HepG2 (cell line): ENCODE measurements at regions of chr2 and their contacts with region 1.

Region 1: DNA sequence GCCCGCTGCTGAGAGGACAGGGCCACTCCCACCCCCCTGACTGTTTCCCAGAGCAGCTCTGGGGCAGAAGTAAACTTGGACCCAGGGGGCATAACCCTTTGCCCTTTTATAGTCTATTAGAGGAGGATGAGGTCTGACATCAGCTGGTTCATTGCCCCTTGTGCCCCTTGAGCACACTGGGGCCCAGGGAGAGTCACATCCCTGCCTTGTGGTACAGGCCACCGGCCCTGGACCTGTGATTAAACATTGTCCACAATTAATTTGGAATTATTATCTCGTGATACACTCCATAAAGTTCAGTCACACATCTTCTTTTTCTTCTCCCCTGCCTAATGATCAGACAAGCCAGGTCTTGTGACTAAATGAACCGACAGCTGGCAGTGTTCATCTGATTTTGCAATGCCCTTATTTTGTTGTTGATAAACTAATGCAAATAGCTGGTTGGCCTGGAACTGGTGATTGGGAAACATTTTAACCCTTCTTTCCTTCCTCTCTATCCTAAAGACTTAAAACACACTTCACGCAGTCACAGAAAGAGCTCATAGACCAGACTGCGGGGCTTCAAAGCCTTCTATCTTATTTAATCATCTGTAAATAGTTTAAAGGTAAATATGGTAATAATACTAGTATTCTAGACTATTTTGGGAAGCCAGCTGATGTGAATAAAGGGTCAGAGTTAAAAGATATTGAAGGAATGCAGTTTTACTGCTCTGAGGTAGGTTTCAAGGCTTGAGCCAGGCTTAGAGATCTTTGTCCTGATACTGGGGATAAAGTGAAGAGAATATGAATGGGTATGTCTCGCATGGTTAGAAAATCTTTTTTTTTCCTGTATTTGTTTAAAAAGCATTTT is 13.3 kb downstream of the IL1R1 start:
- DNase-seq: peak; percentile 100
- ATAC-seq: peak; percentile 91
- H3K4me3 ChIP-seq: peak overlapping the region in 1 of 3 experiments; percentile 21; a peak in 2 of 6 replicates
- H3K27ac ChIP-seq: peak overlapping the region; percentile 80
- H3K4me1 ChIP-seq: peaks cover 84% of the 10 kb centered on the region
- H3K27me3 ChIP-seq: no peaks in the 10 kb centered on the region
- CTCF ChIP-seq: peak; percentile 37; the same call in 1 of the 2 replicates
- EP300 ChIP-seq: peak; percentile 68 to 99; a peak in 3 of 4 replicates
- POLR2A ChIP-seq: peak in 1 of 2 experiments; percentile 18; a peak in 1 of 4 replicates
- RAD21 ChIP-seq: peak; percentile 42; the same call in 1 of the 2 replicates

Region 2: GRCh38 chr2:101883863-101884262 is 272.0 kb before region 1 on chr2:
- CTCF ChIA-PET with region 1: no interaction called
- POLR2A ChIA-PET with region 1: no interaction called
- in situ Hi-C with region 1: no loop called
- intact Hi-C with region 1: no loop called
- DNase-seq: peak; percentile 60
- ATAC-seq: peak; percentile 73
- H3K4me3 ChIP-seq: no peak overlapping the region
- H3K27ac ChIP-seq: no peak overlapping the region
- H3K4me1 ChIP-seq: no peaks in the 10 kb centered on the region
- H3K27me3 ChIP-seq: no peaks in the 10 kb centered on the region
- CTCF ChIP-seq: peak; percentile 68
- EP300 ChIP-seq: no peak
- POLR2A ChIP-seq: no peak
- RAD21 ChIP-seq: peak; percentile 59

Region 3: DNA sequence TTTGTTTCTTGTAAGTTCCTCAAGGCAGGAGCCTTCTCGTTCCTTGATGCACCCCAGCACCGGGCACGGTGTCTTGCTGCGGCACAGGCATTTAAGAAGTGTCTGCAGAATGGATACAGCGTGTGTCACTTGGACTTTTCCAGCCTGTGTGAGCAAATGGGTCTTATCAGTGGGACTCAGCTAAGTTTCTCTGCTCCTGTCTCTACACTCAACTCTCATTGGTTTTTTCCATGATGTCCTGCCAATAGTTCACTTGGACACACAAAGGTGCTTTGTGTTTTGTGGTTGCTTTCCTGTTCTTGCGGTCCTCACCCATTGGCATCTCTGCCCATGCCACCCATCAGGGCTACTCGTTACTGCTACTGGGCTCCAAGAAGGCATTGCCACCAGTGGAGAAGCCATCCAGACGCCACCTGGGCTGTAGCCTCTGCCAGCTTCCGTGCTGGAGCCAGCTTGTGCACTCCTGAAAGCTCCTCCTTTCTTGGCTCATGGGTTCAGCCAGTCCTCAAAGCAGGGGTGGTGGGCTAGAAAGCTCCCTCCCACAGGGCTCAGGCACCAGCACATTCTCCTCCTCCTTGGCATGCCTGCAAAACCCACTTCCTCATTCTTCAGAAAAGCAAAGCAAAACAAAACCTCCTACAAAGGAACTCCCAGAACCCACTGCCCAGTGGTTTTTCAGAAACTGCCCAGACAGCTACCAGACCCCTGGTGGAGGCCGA is 122.7 kb before region 1 on chr2:
- CTCF ChIA-PET with region 1: interaction called, 3 read pairs
- POLR2A ChIA-PET with region 1: interaction called, 37 read pairs
- in situ Hi-C with region 1: no loop called
- intact Hi-C with region 1: loop called (anchors 1 kb)
- DNase-seq: peak; percentile 80
- ATAC-seq: peak; percentile 53
- H3K4me3 ChIP-seq: peak overlapping the region; percentile 8 to 59 (median 14); a peak in 5 of 6 replicates
- H3K27ac ChIP-seq: peak overlapping the region; percentile 73
- H3K4me1 ChIP-seq: peaks cover 83% of the 10 kb centered on the region
- H3K27me3 ChIP-seq: no peaks in the 10 kb centered on the region
- CTCF ChIP-seq: peak; percentile 11; the same call in 1 of the 2 replicates
- EP300 ChIP-seq: peak in 1 of 2 experiments; percentile 50; a peak in 2 of 4 replicates
- POLR2A ChIP-seq: peak; percentile 30 to 62; a peak in 3 of 4 replicates
- RAD21 ChIP-seq: no peak

Region 4: GRCh38 chr2:102057502-102058292 is 98.2 kb before region 1 on chr2:
- CTCF ChIA-PET with region 1: no interaction called
- POLR2A ChIA-PET with region 1: interaction called, 12 read pairs
- in situ Hi-C with region 1: no loop called
- intact Hi-C with region 1: loop called (anchors 2 kb)
- DNase-seq: peak; percentile 98
- ATAC-seq: peak; percentile 88
- H3K4me3 ChIP-seq: peak overlapping the region in 1 of 3 experiments; percentile 39; a peak in 1 of 6 replicates
- H3K27ac ChIP-seq: peak overlapping the region; percentile 89
- H3K4me1 ChIP-seq: peaks cover 89% of the 10 kb centered on the region
- H3K27me3 ChIP-seq: no peaks in the 10 kb centered on the region
- CTCF ChIP-seq: no peak
- EP300 ChIP-seq: peak; percentile 76 to 100; a peak in 3 of 4 replicates
- POLR2A ChIP-seq: no peak
- RAD21 ChIP-seq: peak; percentile 14; the same call in 1 of the 2 replicates

Region 5: DNA sequence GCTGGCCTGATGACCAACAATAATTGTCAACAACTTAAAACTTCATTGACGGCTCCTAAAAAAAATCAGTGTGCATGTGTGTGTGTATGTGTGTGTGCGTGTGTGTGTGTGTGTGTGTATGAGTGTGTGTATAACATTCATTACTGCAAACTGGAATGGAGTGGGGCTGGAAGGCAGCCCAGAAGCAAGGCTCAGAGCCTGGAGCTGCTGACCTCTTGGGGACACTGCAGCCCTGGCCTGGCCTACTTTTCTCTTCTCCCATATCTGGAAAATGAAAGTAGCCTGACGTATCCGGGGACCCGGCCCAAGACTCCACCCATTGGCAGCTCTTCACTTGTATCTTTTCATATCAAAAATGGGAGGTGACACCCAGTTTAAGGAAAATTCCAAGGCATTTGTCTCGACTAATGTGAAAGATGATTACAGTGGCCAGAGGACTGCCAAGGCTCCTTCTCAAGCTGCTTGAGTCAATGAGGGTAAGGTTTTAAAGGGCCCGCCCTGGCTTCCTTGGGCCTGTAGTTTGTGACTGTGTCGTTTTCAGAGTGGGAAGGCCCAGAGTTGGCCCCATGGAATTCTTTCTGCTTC is 85.7 kb before region 1 on chr2:
- CTCF ChIA-PET with region 1: no interaction called
- POLR2A ChIA-PET with region 1: interaction called, 20 read pairs
- in situ Hi-C with region 1: no loop called
- intact Hi-C with region 1: no loop called
- DNase-seq: peak; percentile 79
- ATAC-seq: peak; percentile 96
- H3K4me3 ChIP-seq: peak overlapping the region; percentile 2 to 51 (median 39); a peak in 5 of 6 replicates
- H3K27ac ChIP-seq: peak overlapping the region; percentile 83
- H3K4me1 ChIP-seq: peaks cover 77% of the 10 kb centered on the region
- H3K27me3 ChIP-seq: no peaks in the 10 kb centered on the region
- CTCF ChIP-seq: peak; percentile 80
- EP300 ChIP-seq: 0 out of 4 replicates have a peak, but pooled peaks of 1 of the 2 experiments have one; percentile 4
- POLR2A ChIP-seq: no peak
- RAD21 ChIP-seq: peak; percentile 73

Region 6: GRCh38 chr2:102166189-102166845 is 10.4 kb after region 1 on chr2:
- CTCF ChIA-PET with region 1: no interaction called
- POLR2A ChIA-PET with region 1: interaction called, 21 read pairs
- in situ Hi-C with region 1: no loop called
- intact Hi-C with region 1: no loop called
- DNase-seq: peak; percentile 67
- ATAC-seq: peak; percentile 97
- H3K4me3 ChIP-seq: no peak overlapping the region
- H3K27ac ChIP-seq: no peak overlapping the region
- H3K4me1 ChIP-seq: peaks cover 17% of the 10 kb centered on the region
- H3K27me3 ChIP-seq: no peaks in the 10 kb centered on the region
- CTCF ChIP-seq: peak; percentile 83
- EP300 ChIP-seq: peak in 1 of 2 experiments; percentile 52; a peak in 1 of 4 replicates
- POLR2A ChIP-seq: no peak
- RAD21 ChIP-seq: peak; percentile 86